ENCODE measurements at regions of chr1 and their contacts with region 1.

Region 1: DNA sequence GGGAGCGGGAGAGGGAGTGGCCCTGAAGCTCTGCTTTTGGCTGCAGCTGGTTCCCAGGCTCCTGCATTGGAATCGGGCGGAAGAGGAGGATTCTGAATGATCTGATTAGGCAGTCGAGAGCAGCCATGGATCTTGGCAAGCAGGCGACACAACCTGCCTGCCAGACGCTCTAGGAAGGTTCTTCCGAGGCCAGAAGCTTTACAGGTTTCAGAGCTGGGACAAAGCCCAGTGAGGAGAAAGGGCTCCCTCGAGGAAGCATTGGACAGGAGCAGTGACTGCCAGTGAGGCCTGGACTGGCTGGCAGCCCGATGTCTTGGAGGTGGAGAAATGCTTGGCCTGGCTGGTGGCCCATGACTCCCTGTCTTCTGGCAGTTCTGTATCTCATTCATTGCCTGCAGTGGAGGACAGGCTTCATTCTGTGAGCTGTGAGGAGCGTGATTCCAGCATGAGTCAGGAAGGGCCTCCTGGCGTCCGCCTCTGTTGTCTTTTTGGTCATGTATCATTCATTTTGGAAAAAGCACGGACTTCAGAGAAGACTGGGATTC is 132.7 kb upstream of the IPO9 start:
- DNase-seq: peak; percentile 81 to 89
- ATAC-seq: peak; percentile 70 to 90 (median 82)
- H3K4me3 ChIP-seq: no peak overlapping the region
- H3K27ac ChIP-seq: peak overlapping the region; percentile 0 to 79 (median 54)
- H3K4me1 ChIP-seq: peaks cover 23 to 75% (median 70%) of the 10 kb centered on the region in 9 donors
- H3K27me3 ChIP-seq: no peaks in the 10 kb centered on the region
- CTCF ChIP-seq: peak in 3 of 9 donors; percentile 15 to 19 (median 16)

Region 2: GRCh38 chr1:201538612-201539551 is 157.4 kb before region 1 on chr1 and contains the start of gene NAV1:
- intact Hi-C with region 1: no loop called
- DNase-seq: peak; percentile 70 to 78
- ATAC-seq: peak; percentile 56 to 86 (median 75)
- H3K4me3 ChIP-seq: peak within 1 kb of the TSS; percentile 53 to 86 (median 72)
- H3K27ac ChIP-seq: peak within 1 kb of the TSS; percentile 84 to 94 (median 89)
- H3K4me1 ChIP-seq: peaks cover 9 to 88% (median 69%) of the 10 kb centered on the region in 9 donors
- H3K27me3 ChIP-seq: peaks cover 0 to 5% (median 0%) of the 10 kb centered on the region in 7 donors
- CTCF ChIP-seq: no peak
- total RNA-seq, gene NAV1: 29.5 to 111 (median 89.0) TPM

Region 3: DNA sequence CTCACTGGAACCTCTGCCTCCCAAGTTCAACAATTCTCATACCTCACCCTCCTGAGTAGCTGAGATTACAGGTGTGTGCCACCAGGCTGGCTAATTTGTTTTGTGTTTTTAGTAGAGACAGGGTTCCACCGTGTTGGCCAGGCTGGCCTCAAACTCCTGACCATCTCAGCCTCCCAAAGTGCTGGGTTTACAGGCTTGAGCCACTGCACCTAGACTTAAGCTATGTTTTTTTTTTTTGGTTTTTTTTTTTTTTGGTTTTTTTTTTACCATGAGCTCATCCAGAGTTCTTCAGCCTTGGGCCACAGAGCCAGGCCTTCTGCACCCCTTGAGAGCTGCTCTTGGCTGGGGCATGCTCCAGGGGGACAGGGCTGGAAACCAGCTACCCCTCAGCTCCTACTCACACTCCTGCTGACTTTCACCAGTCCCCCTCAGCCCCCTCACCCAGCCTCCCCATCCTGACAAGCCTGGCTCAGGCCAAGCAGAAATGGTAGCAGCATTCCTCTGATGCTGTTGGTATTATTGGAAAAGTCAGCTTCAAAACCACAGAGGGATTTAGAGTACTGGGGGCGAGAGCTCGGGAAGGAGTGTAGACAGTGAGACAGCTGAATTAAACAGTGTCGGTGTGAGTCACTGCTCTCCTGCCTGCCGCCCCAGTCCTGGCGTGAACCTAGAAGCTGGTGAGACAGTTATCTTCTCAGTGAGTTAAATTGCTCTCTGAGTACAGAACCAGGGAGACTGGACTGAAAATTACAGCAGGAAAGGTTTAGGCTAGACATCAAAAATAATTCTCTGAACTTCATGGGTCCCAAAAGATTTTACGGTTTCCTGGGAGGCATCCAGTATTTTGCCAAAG is 93.7 kb before region 1 on chr1:
- intact Hi-C with region 1: loop called in 1 of 10 experiments (anchors 5 kb)
- DNase-seq: no peak
- ATAC-seq: peak in 7 of 8 donors; percentile 29 to 85 (median 51)
- H3K4me3 ChIP-seq: no peak overlapping the region
- H3K27ac ChIP-seq: peak overlapping the region in 2 of 10 donors; percentile 47 to 59
- H3K4me1 ChIP-seq: peaks cover 7 to 76% (median 49%) of the 10 kb centered on the region in 9 donors
- H3K27me3 ChIP-seq: no peaks in the 10 kb centered on the region
- CTCF ChIP-seq: no peak

Region 4: GRCh38 chr1:201655243-201655642 is 41.0 kb before region 1 on chr1:
- intact Hi-C with region 1: loop called in 3 of 10 experiments (anchors 5 kb)
- DNase-seq: peak in 1 of 2 donors; percentile 41
- ATAC-seq: peak in 7 of 8 donors; percentile 23 to 66 (median 31)
- H3K4me3 ChIP-seq: no peak overlapping the region
- H3K27ac ChIP-seq: peak overlapping the region in 3 of 10 donors; percentile 10 to 41 (median 24)
- H3K4me1 ChIP-seq: peaks cover 22 to 92% (median 48%) of the 10 kb centered on the region in 9 donors
- H3K27me3 ChIP-seq: peaks cover 0 to under 1% (median 0%) of the 10 kb centered on the region in 7 donors
- CTCF ChIP-seq: peak in 2 of 9 donors; percentile 14 to 18

Measured in heart right ventricle (tissue), 16 donors.